ENCODE measurements at regions of chr5 and their contacts with region 1.

Region 1: GRCh38 chr5:67133776-67134175 is 62.8 kb downstream of the CD180 start:
- DNase-seq: no peak
- ATAC-seq: no peak
- H3K4me3 ChIP-seq: no peak overlapping the region
- H3K4me3 Mint-ChIP-seq: no peak overlapping the region
- H3K27ac ChIP-seq: no peak overlapping the region
- H3K27ac Mint-ChIP-seq: no peak overlapping the region
- H3K4me1 ChIP-seq: no peaks in the 10 kb centered on the region
- H3K4me1 Mint-ChIP-seq: no peaks in the 10 kb centered on the region
- H3K27me3 ChIP-seq: no peaks in the 10 kb centered on the region
- H3K27me3 Mint-ChIP-seq: no peaks in the 10 kb centered on the region
- CTCF ChIP-seq: no peak

Region 2: GRCh38 chr5:67149951-67150523 is 16.3 kb after region 1 on chr5:
- CTCF ChIA-PET with region 1: interaction called, 3 read pairs
- POLR2A ChIA-PET with region 1: no interaction called
- intact Hi-C with region 1: loop called in 1 of 2 experiments (anchors 1 kb)
- DNase-seq: no peak
- ATAC-seq: no peak
- H3K4me3 ChIP-seq: no peak overlapping the region
- H3K4me3 Mint-ChIP-seq: no peak overlapping the region
- H3K27ac ChIP-seq: no peak overlapping the region
- H3K27ac Mint-ChIP-seq: no peak overlapping the region
- H3K4me1 ChIP-seq: no peaks in the 10 kb centered on the region
- H3K4me1 Mint-ChIP-seq: no peaks in the 10 kb centered on the region
- H3K27me3 ChIP-seq: no peaks in the 10 kb centered on the region
- H3K27me3 Mint-ChIP-seq: no peaks in the 10 kb centered on the region
- CTCF ChIP-seq: no peak

Region 3: DNA sequence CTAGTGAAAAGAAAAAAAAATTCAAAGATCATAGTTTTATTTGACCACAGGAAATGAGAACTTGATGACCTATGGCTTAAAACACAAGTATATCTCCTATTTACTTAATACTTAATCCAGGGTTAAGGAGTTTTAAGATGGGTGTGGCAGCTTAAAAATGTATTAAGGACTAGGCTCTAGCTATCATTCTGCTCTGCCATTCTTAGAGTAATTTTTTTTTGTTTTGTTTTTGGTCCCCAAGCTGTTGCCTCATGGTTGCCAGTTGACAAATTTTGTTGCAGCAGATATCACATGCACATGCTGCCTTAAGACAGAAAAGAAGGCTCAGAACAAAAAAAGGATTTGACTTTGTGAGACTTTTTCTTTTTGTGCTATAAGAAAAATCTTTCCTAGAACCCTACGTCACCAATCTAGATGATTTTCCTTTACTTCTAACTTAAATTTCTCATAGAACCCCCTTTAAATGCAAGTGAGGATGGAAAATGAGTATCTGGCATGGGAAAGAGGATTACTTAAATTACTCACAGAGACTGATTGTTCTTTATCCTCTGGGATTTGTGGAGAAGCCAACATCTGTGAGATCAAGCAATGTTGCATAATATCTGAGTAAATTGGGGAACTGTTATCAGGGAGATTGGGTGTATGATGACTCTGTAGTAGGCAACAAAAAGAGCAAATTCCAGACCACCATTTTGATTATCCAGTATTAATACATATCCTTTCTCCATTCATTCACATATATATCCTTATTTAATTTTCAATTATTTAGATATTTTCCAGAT is 427.6 kb after region 1 on chr5:
- CTCF ChIA-PET with region 1: no interaction called
- POLR2A ChIA-PET with region 1: no interaction called
- intact Hi-C with region 1: no loop called
- DNase-seq: no peak
- ATAC-seq: no peak
- H3K4me3 ChIP-seq: no peak overlapping the region
- H3K4me3 Mint-ChIP-seq: no peak overlapping the region
- H3K27ac ChIP-seq: no peak overlapping the region
- H3K27ac Mint-ChIP-seq: no peak overlapping the region
- H3K4me1 ChIP-seq: no peaks in the 10 kb centered on the region
- H3K4me1 Mint-ChIP-seq: peaks cover 4% of the 10 kb centered on the region
- H3K27me3 ChIP-seq: no peaks in the 10 kb centered on the region
- H3K27me3 Mint-ChIP-seq: no peaks in the 10 kb centered on the region
- CTCF ChIP-seq: no peak